Lower leg skin (tissue), 4 donors: ENCODE measurements at regions of chr4 and their contacts with region 1.

Region 1: DNA sequence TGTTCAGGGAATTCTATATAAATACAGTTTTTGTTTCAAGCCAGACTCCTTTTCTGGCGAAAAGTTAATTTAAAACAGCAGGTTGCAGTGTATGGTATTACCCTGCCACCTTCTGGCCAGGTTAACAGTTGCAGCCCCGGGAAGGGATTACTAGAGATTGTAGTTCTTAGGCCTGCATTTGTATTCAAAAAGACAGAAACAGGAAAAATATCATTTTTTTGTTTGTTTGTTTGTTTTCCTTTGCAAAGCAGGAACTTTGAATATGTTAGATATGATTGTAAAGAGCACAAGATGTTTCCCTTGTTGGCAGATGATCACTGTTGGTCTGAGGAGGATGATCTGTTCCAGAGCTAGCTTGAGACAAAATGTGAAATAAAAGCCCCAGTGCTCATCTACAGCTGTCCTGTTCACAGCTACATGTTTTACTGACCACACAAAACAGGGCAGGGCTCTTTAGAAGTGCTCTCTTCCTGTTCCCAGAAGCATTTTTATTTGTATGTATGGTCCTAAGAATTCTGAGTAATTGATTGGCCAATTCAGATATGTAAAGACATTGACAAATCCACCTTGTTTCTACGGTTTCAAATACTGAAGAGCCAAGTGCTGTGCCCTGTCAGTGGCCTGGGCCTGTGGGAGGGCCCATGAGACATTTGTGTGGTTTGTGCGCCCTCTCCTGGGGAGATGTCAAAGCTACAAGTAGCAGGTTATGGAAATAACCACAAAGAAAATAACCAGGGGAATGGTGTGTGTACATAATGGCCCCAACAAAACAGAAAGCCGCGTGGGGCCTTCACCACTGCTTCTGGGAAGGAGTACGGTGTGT is 57.9 kb downstream of the CLDN22 start:
- DNase-seq: peak; percentile 71 to 94
- H3K4me3 ChIP-seq: no peak overlapping the region
- CTCF ChIP-seq: peak in 1 of 3 donors; percentile 40
- POLR2A ChIP-seq: no peak

Region 2: DNA sequence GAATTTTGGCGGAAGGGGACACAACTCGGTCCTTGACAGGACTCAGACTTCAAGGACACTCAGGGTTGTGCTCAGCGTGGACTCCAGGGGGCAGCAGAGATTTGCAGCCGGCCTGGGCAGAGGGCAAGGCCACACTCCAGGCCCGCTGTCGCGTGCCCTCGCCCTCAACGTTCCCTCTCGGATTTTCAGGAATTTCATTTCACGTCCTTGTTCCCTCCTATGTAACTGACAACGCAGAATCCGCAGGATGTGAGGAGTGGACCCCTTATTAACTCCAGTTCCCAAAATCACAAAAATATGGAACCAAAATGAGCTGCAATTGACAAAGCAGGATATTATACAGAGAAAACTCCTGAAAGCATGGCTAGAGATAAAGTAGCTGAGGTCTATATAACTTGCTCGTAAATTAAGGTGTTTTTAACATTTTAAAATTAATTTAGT is 323.9 kb before region 1 on chr4:
- intact Hi-C with region 1: loop called (anchors 5 kb)
- DNase-seq: peak; percentile 58 to 95
- H3K4me3 ChIP-seq: no peak overlapping the region
- CTCF ChIP-seq: no peak
- POLR2A ChIP-seq: no peak

Region 3: GRCh38 chr4:183074296-183074990 is 187.7 kb before region 1 on chr4:
- intact Hi-C with region 1: loop called (anchors 5 kb)
- DNase-seq: no peak
- H3K4me3 ChIP-seq: no peak overlapping the region
- CTCF ChIP-seq: no peak
- POLR2A ChIP-seq: no peak